ENCODE measurements at regions of chr18 and their contacts with region 1.

Region 1: DNA sequence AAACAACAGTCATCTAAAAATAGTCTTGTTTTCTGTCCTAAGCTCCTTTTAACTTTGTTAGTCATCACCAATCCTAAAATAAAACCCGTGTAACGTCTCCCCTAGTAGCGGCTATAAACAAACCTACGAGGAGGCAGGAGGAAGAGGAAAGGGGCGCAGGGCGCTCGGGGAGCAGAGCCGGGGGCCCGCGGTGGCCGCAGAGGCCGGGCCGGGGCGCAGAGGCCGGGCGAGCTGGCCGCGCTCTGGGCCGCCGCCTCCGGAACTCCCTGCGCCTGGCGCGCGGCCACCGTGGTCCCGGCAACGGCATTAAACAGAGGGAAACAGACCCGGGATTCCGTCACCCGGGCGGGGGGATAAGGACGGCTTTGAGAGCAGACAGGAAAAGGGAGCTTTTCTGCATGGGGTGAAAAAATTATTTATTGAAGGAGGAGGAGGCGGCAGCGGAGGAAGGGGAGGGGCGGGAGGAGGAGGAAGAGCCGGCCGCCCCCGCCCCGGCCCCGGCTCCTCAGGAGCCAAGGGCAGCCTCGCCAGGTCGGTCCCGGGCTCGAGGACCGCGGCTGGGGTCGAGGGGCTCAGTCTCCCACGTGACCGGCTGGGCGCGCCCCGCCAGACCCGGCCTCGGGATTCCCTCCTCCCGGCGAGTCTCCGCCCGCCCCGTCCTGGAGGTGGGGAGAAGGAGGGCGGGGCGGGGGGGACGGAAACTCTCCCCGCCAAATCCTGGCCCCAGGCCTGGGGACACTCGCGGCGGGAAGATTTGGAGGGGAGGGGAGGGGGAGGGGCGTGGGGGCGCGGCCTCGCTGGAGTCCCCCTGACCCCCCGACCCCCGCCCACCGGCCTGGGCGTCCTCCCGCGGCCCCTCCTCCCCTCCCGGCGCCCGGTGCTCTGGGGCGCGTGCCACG is 1.8 kb upstream of the NFATC1 start:
- DNase-seq: no peak
- H3K4me3 Mint-ChIP-seq: peak overlapping the region; percentile 85
- H3K27ac Mint-ChIP-seq: peak overlapping the region; percentile 89
- H3K4me1 Mint-ChIP-seq: peaks cover 11% of the 10 kb centered on the region
- H3K27me3 Mint-ChIP-seq: peaks cover 33% of the 10 kb centered on the region

Region 2: DNA sequence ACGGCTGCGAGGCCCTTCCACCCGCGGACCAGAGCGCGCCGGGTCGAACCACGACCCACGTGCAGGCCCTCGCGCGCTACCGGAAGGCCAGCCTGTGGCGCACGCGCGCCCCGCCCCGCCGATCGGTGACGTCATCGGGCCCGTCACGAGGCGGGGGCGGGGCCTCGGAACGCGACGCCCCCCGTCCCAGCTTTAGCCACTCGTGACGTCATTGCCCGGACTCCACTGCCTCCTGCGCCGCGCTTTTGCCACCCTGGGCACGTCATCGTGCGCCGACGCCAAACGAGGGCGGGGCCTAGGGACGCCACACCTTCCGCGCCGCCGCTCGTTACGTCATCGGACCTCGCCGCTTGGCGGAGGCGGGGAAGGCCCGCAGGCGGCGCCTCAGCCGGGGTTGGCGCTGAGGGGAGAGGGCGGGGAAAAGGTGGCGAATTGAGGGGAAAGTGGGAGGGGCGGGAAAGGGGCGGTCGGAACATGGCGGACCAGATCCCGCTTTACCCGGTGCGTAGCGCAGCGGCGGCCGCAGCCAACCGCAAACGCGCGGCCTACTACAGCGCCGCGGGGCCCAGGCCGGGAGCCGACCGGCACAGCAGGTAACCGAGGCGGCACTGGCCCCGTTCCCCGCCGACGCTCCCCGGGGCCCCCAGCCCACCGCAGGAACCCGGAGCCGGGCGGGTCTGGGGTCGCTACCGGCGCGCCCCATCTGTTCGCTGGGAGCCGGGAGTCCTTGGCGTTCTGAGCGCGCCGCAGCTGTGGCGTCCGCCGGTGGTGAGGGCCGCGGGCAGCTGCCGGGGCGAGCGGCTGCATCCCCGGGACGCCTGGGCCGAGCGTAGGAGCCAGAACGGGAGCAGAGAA is 324.7 kb before region 1 on chr18 and contains the start of gene ATP9B:
- intact Hi-C with region 1: loop called (anchors 5 kb)
- DNase-seq: peak; percentile 98
- H3K4me3 Mint-ChIP-seq: peak within 1 kb of the TSS; percentile 87
- H3K27ac Mint-ChIP-seq: peak within 1 kb of the TSS; percentile 98
- H3K4me1 Mint-ChIP-seq: peaks cover 26% of the 10 kb centered on the region
- H3K27me3 Mint-ChIP-seq: peaks cover 20% of the 10 kb centered on the region
- total RNA-seq, gene ATP9B: 27.6 and 29.8 TPM in 2 replicates

Region 3: GRCh38 chr18:79343567-79344207 is 50.2 kb before region 1 on chr18:
- intact Hi-C with region 1: no loop called
- DNase-seq: no peak
- H3K4me3 Mint-ChIP-seq: no peak overlapping the region
- H3K27ac Mint-ChIP-seq: no peak overlapping the region
- H3K4me1 Mint-ChIP-seq: no peaks in the 10 kb centered on the region
- H3K27me3 Mint-ChIP-seq: no peaks in the 10 kb centered on the region

Region 4: GRCh38 chr18:79378542-79379250 is 15.2 kb before region 1 on chr18:
- intact Hi-C with region 1: loop called (anchors 2 kb)
- DNase-seq: peak; percentile 71
- H3K4me3 Mint-ChIP-seq: no peak overlapping the region
- H3K27ac Mint-ChIP-seq: no peak overlapping the region
- H3K4me1 Mint-ChIP-seq: peaks cover 11% of the 10 kb centered on the region
- H3K27me3 Mint-ChIP-seq: no peaks in the 10 kb centered on the region

Region 5: DNA sequence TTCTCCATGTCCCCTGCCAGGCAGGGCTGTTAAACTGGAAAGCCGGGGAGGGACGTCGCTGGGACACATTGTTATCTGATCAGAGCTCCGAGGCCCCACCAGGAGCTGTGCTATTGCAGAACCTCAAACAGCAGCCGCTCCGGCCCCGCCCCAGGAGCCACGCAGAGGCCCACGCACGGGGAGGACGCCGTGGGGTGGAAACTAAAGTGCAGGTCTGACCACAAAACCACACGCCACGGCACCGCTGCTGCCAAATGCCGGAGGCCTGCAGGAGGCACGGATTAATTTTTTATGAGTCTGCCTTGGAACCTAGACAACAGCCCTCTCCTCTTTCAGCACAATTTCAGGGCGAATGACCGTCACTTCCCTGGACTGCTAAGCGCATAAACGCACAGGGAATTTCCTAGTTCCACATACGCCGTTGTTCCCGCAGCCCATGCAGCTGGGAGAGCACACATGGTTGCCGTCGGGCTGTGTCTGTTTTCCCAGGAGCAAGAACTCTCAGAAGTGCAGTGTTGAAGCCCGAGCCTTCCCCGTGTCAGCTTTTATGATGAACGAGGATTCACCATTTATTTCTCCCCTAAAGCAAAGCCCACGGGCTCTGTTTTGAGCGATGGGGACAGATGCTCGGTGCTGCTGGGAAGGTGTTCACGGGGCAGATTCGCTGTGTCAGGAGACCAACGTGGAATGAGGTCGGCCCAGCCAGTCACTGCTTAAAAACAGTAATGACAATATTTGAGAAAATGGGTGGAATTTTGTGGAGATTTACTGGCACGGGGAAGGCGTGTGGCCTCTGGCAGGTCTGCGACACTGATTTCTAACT is 45.5 kb after region 1 on chr18:
- intact Hi-C with region 1: loop called (anchors 5 kb)
- DNase-seq: no peak
- H3K4me3 Mint-ChIP-seq: no peak overlapping the region
- H3K27ac Mint-ChIP-seq: no peak overlapping the region
- H3K4me1 Mint-ChIP-seq: peaks cover 16% of the 10 kb centered on the region
- H3K27me3 Mint-ChIP-seq: no peaks in the 10 kb centered on the region

Region 6: DNA sequence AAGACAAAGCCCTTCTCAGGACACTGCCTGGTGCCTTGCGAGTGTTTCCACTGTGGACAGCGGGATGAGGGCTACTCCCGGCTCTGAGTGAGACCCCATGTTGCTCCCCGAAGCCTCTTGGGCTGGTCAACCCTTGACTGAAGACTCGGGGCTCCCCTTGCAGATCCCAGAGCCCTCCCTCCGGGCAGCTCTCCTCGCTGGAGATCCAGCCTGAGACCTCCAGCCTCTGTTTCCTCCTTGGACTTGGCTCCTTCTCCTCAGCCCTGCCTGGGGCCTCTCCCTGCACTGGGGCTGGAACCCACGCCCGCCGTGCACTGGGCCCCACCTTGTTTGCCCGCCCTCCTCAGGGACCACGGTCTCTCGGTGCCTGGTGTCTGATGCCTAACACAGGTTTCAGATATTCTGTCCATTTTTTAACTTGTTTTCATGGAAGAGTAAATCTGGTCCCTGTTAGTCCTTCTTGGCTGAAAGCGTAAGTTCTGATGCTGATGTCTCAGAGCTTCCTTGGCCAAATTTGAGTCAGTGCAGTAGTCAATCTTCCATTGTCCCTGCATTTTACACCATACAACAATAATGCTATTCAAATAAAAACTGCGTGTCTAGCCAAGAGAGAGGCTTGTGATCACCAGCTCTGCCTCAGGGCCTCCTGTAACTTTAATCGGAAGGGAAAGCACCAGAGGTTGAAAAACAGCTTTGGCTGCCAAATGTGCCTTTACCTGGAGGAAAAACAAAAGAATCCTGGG is 146.4 kb after region 1 on chr18:
- intact Hi-C with region 1: no loop called
- DNase-seq: no peak
- H3K4me3 Mint-ChIP-seq: no peak overlapping the region
- H3K27ac Mint-ChIP-seq: no peak overlapping the region
- H3K4me1 Mint-ChIP-seq: peaks cover 2% of the 10 kb centered on the region
- H3K27me3 Mint-ChIP-seq: peaks cover 5% of the 10 kb centered on the region

Region 7: GRCh38 chr18:80034068-80034851 is 640.4 kb after region 1 on chr18 and contains the start of gene RBFA:
- intact Hi-C with region 1: loop called (anchors 5 kb)
- DNase-seq: peak; percentile 98
- H3K4me3 Mint-ChIP-seq: peak within 1 kb of the TSS; percentile 78
- H3K27ac Mint-ChIP-seq: peak within 1 kb of the TSS; percentile 91
- H3K4me1 Mint-ChIP-seq: peaks cover 28% of the 10 kb centered on the region
- H3K27me3 Mint-ChIP-seq: no peaks in the 10 kb centered on the region
- total RNA-seq, gene RBFA: 48.4 and 49.4 TPM in 2 replicates

Measured in activated T-helper 2 cell treated with anti-CD3 and anti-CD28 coated beads, Interferon-gamma antibody, Interleukin-2, Interleukin-4, amounts not matched to agents 10 μg/mL and 5 μg/mL and 100 μg/mL, durations not matched to agents 14 hours and 24 hours and 36 hours (primary cell).